Ascending aorta (tissue), 2 donors: ENCODE measurements at regions of chr11 and their contacts with region 1.

Region 1: DNA sequence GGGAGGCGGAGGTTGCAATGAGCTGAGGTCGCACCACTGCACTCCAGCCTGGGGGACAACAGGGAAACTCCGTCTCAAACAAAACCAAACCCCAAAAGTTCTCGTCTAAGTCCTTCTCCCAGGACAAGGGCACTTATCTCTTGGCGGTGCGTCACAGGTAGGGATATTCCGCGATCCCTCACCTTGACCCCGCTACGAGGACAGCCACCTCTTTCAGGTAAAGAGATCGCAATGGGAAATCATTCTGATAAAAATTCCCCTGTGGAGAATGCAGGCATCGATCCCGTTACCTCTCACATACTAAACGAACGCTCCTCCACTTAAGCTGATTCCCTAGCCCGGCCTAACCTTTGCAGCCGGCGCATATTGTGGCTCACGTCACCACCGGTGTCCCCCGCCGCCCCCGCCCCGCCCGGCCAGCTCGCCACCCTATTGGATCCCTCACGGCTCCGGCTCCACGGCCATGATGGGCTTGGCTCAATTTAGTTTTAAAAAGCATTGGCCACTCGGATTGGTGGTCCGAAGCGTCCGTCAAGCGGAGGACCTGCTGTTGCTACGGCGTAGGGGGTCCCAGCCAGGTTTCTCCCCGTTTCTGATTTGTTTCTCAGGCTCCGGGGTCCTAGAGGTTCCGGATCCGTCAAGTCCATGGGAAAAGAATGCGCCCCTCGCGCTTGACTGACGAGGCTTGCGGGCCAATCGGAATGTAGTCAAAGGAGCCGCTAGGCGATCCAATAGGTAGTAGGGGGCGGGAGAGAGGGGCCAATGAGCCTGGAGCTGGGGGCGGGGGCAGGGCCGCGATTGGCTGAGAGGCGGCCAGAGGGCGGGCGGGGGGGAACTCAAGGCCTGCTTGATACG is 439 bp upstream of the PPP6R3 start:
- DNase-seq: peak; percentile 96 to 99
- H3K4me3 ChIP-seq: peak overlapping the region; percentile 71 to 74
- H3K27ac ChIP-seq: peak overlapping the region; percentile 92
- H3K4me1 ChIP-seq: peaks cover 6 to 25% of the 10 kb centered on the region in 2 donors
- H3K27me3 ChIP-seq: no peaks in the 10 kb centered on the region
- CTCF ChIP-seq: peak in 1 of 3 experiments; percentile 12

Region 2: GRCh38 chr11:68030318-68031138 is 429.6 kb before region 1 on chr11 and contains the start of gene NDUFS8:
- intact Hi-C with region 1: loop called (anchors 10 kb)
- DNase-seq: peak; percentile 95 to 99
- H3K4me3 ChIP-seq: peak within 1 kb of the TSS; percentile 75 to 96
- H3K27ac ChIP-seq: peak within 1 kb of the TSS; percentile 73 to 77
- H3K4me1 ChIP-seq: peaks cover 9 to 17% of the 10 kb centered on the region in 2 donors
- H3K27me3 ChIP-seq: no peaks in the 10 kb centered on the region
- CTCF ChIP-seq: no peak
- total RNA-seq, gene NDUFS8: 316 TPM

Region 3: GRCh38 chr11:68271781-68272608 is 188.1 kb before region 1 on chr11 and contains the start of gene C11orf24:
- intact Hi-C with region 1: loop called (anchors 2 kb)
- DNase-seq: peak; percentile 80 to 96
- H3K4me3 ChIP-seq: peak within 1 kb of the TSS; percentile 78 to 82
- H3K27ac ChIP-seq: peak within 1 kb of the TSS; percentile 91 to 94
- H3K4me1 ChIP-seq: peaks cover 8 to 19% of the 10 kb centered on the region in 2 donors
- H3K27me3 ChIP-seq: no peaks in the 10 kb centered on the region
- CTCF ChIP-seq: no peak
- total RNA-seq, gene C11orf24: 123 TPM

Region 4: GRCh38 chr11:68370211-68371111 is 89.7 kb before region 1 on chr11:
- intact Hi-C with region 1: no loop called
- DNase-seq: no peak
- H3K4me3 ChIP-seq: no peak overlapping the region
- H3K27ac ChIP-seq: peak overlapping the region; percentile 86 to 95
- H3K4me1 ChIP-seq: peaks cover 39 to 56% of the 10 kb centered on the region in 2 donors
- H3K27me3 ChIP-seq: no peaks in the 10 kb centered on the region
- CTCF ChIP-seq: no peak

Region 5: DNA sequence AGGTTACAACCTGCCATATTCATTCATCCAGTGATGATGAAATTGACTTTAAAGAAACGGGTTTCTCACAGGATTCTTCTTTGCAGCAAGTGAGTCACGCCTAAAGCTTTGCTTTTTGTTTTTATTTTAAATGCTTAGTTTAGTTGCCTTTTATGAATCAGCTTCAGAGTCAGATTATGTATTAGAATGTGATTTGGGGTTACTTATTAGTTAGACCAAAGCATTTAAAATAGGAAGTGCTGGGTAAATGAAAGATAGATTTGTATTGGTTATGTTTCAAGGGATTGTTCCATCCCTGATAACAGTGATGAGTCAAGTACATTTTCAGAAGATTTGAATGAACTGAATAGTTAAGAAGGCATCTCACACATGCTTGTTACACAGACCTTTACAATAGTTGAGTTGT is 122.9 kb after region 1 on chr11:
- intact Hi-C with region 1: loop called (anchors 2 kb)
- DNase-seq: no peak
- H3K4me3 ChIP-seq: peak overlapping the region in 1 of 2 donors; percentile 29
- H3K27ac ChIP-seq: peak overlapping the region; percentile 50 to 75
- H3K4me1 ChIP-seq: peaks cover 17 to 28% of the 10 kb centered on the region in 2 donors
- H3K27me3 ChIP-seq: no peaks in the 10 kb centered on the region
- CTCF ChIP-seq: no peak